Breast epithelium (tissue), 4 donors: ENCODE measurements at regions of chr11 and their contacts with region 1.

Region 1: DNA sequence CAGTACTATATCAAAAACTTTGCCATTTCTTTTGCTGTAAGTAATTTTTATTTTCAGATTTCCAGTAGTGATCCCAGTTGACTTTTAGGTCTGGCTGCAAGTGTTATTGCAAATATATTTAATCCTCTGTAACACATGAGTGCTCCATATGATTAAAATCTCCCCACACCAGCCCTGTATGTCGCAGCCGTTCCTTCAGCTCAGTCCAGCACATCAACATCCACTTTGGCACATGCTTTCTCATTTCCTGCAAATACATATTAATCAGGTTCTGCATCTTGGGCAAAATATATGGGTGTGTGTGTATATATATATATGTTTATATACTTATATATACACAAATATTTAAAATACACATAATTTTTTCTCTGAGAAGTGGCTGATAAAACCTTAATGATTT is 919.5 kb downstream of the JRKL start:
- DNase-seq: no peak
- H3K4me3 ChIP-seq: no peak overlapping the region
- H3K27ac ChIP-seq: no peak overlapping the region
- H3K4me1 ChIP-seq: no peaks in the 10 kb centered on the region
- H3K27me3 ChIP-seq: no peaks in the 10 kb centered on the region
- CTCF ChIP-seq: no peak
- POLR2A ChIP-seq: no peak

Region 2: DNA sequence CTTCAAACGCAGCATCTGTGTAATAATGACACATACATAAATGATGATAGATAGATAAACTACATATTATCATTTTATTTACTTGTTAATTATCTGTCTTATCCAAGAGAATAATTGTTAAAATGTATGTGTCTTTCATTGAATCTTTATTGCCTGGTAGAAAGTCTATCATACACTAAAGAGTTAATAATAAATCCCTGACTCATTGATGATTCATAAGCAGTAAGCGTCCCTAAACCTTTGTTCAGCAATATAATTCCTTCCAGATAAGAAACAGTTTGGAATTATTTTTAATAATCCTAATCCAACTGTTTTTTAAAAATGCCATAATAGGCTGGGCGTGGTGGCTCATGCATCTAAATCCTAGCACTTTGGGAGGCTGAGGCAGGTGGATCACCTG is 1055.9 kb after region 1 on chr11:
- intact Hi-C with region 1: loop called (anchors 5 kb)
- DNase-seq: no peak
- H3K4me3 ChIP-seq: no peak overlapping the region
- H3K27ac ChIP-seq: no peak overlapping the region
- H3K4me1 ChIP-seq: no peaks in the 10 kb centered on the region
- H3K27me3 ChIP-seq: no peaks in the 10 kb centered on the region
- CTCF ChIP-seq: no peak
- POLR2A ChIP-seq: no peak